K562 (cell line): ENCODE measurements at regions of chr2 and their contacts with region 1.

Region 1: GRCh38 chr2:169573160-169573973 is at the start of gene FASTKD1:
- DNase-seq: peak; percentile 83 to 99 (median 89)
- ATAC-seq: peak; percentile 93
- H3K4me3 ChIP-seq: peak within 1 kb of the TSS; percentile 61
- H3K27ac ChIP-seq: peak within 1 kb of the TSS; percentile 85
- H3K4me1 ChIP-seq: peaks cover 4 to 18% of the 10 kb centered on the region in 2 experiments; a peak in 4 of 5 replicates
- H3K27me3 ChIP-seq: no peaks in the 10 kb centered on the region
- CTCF ChIP-seq: no peak
- EP300 ChIP-seq: peak; percentile 59
- POLR2A ChIP-seq: peak; percentile 88
- RAD21 ChIP-seq: no peak
- polyA plus RNA-seq, gene FASTKD1: 121 to 132 TPM

Region 2: DNA sequence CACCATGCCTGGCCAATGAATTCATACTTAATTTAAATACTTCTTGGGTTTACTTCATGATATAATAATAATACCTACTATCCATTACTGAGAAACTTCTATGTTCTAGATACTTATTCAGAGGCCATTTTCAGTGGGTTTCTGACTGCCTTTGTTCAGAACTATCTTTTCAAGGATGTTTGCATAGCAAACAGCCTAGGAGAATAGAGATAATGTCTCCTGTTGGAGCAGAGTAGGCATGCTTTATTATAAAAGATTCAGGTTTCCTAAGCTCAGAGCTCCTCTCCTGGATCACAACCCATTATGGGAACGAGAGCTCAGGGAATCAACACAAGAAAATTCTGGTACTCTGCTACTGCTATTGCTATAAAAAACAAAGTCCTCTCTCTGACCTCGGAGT is 10.8 kb before region 1 on chr2:
- CTCF ChIA-PET with region 1: no interaction called
- POLR2A ChIA-PET with region 1: interaction called, 17 read pairs
- in situ Hi-C with region 1: no loop called
- intact Hi-C with region 1: no loop called
- DNase-seq: no peak
- ATAC-seq: no peak; the same call in 1 of the 3 replicates
- H3K4me3 ChIP-seq: no peak overlapping the region
- H3K27ac ChIP-seq: peak overlapping the region; percentile 23; the same call in 1 of the 3 replicates
- H3K4me1 ChIP-seq: no peaks in the 10 kb centered on the region
- H3K27me3 ChIP-seq: no peaks in the 10 kb centered on the region
- CTCF ChIP-seq: no peak
- EP300 ChIP-seq: no peak
- POLR2A ChIP-seq: no peak
- RAD21 ChIP-seq: no peak

Region 3: GRCh38 chr2:169584005-169584877 is 10.9 kb after region 1 on chr2 and contains the start of gene PPIG:
- CTCF ChIA-PET with region 1: no interaction called
- POLR2A ChIA-PET with region 1: interaction called, 16 read pairs
- in situ Hi-C with region 1: no loop called
- intact Hi-C with region 1: loop called (anchors 1 kb)
- DNase-seq: peak; percentile 91 to 98 (median 94)
- ATAC-seq: peak; percentile 96
- H3K4me3 ChIP-seq: peak within 1 kb of the TSS; percentile 64
- H3K27ac ChIP-seq: peak within 1 kb of the TSS; percentile 99
- H3K4me1 ChIP-seq: peaks cover 3 to 4% of the 10 kb centered on the region in 2 experiments; a peak in 2 of 5 replicates
- H3K27me3 ChIP-seq: no peaks in the 10 kb centered on the region
- CTCF ChIP-seq: 0 out of 6 replicates have a peak, but pooled peaks of 1 of the 3 experiments have one; percentile 13
- EP300 ChIP-seq: peak; percentile 61; the same call in 1 of the 2 replicates
- POLR2A ChIP-seq: peak; percentile 93
- RAD21 ChIP-seq: peak in 1 of 2 experiments; percentile 6; a peak in 1 of 4 replicates
- polyA plus RNA-seq, gene PPIG: 92.9 to 166 TPM

Region 4: DNA sequence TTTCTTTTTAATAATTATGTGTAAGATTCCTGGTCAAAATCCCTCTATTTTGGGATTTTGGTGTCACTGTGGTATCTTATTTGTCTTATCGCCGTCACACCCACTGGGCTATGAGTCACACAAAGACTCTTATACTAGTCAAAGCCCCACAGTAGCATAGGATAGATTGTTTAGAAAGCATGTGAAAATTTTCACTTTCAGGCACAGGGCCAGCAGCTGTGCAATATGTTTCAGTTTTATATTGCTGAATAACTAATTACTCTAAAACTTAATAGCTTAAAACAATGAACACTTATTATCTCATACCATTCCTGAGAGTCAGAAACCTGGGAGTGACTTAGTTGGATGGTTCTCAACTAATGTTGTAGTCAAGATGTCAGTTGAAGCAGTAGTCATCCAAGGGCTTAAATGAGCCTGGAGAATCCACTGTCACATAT is 96.9 kb after region 1 on chr2:
- CTCF ChIA-PET with region 1: no interaction called
- POLR2A ChIA-PET with region 1: no interaction called
- in situ Hi-C with region 1: no loop called
- intact Hi-C with region 1: loop called (anchors 5 kb)
- DNase-seq: peak; percentile 66 to 84 (median 76)
- ATAC-seq: peak; percentile 86
- H3K4me3 ChIP-seq: no peak overlapping the region
- H3K27ac ChIP-seq: peak overlapping the region; percentile 65
- H3K4me1 ChIP-seq: peaks cover 0 to 49% of the 10 kb centered on the region in 2 experiments; a peak in 3 of 5 replicates
- H3K27me3 ChIP-seq: no peaks in the 10 kb centered on the region
- CTCF ChIP-seq: no peak
- EP300 ChIP-seq: peak; percentile 82; the same call in 1 of the 2 replicates
- POLR2A ChIP-seq: no peak
- RAD21 ChIP-seq: no peak

Region 5: DNA sequence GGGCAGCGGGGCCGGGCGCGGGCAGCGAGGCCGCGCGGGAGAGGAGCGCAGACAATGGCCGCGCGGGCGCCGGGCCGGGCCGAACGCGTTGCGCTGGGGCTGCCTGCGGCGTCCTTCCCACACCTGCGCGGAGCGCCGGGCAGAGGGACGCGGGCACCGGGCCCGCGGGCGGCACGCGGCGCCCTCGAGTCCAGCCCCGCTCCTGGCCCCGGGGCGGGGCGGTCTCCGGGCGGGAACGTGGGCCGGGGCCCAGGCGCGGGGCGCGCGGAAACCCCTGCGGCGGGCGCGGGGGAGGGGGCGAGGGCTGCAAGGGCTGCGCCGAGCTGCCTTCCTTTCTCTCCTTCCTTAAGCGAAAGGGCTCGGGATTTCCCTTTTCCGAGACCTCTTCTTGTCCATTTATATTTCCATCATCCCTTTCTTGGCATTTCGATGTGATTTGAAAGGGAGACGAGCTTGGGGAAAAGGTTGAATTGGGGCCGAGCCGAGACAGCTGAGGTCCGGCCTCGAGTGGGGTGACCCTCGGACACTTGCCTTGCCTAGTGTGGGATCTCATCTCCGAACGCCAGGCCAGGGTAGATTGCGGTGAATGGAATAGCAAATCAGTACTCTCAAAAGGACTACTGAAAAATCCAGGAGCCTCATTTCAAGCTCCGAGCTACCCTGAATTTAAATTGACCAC is 160.9 kb after region 1 on chr2:
- CTCF ChIA-PET with region 1: no interaction called
- POLR2A ChIA-PET with region 1: no interaction called
- in situ Hi-C with region 1: no loop called
- intact Hi-C with region 1: no loop called
- DNase-seq: peak; percentile 58 to 74 (median 70)
- ATAC-seq: peak; percentile 39
- H3K4me3 ChIP-seq: peak overlapping the region; percentile 64
- H3K27ac ChIP-seq: peak overlapping the region; percentile 69
- H3K4me1 ChIP-seq: peaks cover 22 to 27% of the 10 kb centered on the region in 2 experiments
- H3K27me3 ChIP-seq: no peaks in the 10 kb centered on the region
- CTCF ChIP-seq: no peak
- EP300 ChIP-seq: no peak
- POLR2A ChIP-seq: no peak
- RAD21 ChIP-seq: no peak